ENCODE measurements at regions of chr15 and their contacts with region 1.

Region 1: GRCh38 chr15:60326824-60327654 is 70.7 kb downstream of the ANXA2 start:
- DNase-seq: no peak
- ATAC-seq: no peak
- H3K4me3 ChIP-seq: no peak overlapping the region
- H3K27ac ChIP-seq: no peak overlapping the region
- H3K4me1 ChIP-seq: peaks cover 0 to 1% of the 10 kb centered on the region in 2 donors
- H3K27me3 ChIP-seq: no peaks in the 10 kb centered on the region

Region 2: GRCh38 chr15:59688841-59689625 is 638.0 kb before region 1 on chr15 and contains the start of gene BNIP2:
- intact Hi-C with region 1: loop called (anchors 2 to 10 kb)
- DNase-seq: peak; percentile 100
- ATAC-seq: peak; percentile 99
- H3K4me3 ChIP-seq: peak within 1 kb of the TSS; percentile 77 to 80
- H3K27ac ChIP-seq: peak within 1 kb of the TSS; percentile 81 to 92
- H3K4me1 ChIP-seq: no peaks in the 10 kb centered on the region
- H3K27me3 ChIP-seq: no peaks in the 10 kb centered on the region
- total RNA-seq, gene BNIP2: 85.8 to 90.5 TPM

Region 3: DNA sequence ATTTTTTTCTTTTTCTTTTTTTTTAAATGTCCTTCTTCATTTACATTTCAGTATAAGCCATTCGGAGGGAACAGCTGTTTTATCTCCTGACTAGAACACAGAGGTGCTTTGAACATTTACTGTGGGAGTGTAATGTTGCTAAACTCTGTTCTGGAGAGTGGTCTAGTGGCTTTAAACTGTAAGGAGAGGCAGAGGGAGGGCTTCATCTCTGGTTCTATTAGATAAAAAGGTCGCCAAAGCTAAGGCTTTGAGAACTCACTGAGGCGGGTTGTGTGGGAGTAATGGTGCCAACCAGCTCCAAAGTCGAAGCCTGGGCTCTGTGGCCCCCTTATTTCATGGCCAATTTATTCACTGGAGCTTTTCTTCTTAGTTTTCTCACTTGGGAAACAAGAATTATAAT is 62.5 kb before region 1 on chr15:
- intact Hi-C with region 1: loop called in 1 of 2 experiments (anchors 10 kb)
- DNase-seq: no peak
- ATAC-seq: no peak
- H3K4me3 ChIP-seq: no peak overlapping the region
- H3K27ac ChIP-seq: no peak overlapping the region
- H3K4me1 ChIP-seq: no peaks in the 10 kb centered on the region
- H3K27me3 ChIP-seq: peaks cover 0 to 2% of the 10 kb centered on the region in 2 donors

Region 4: DNA sequence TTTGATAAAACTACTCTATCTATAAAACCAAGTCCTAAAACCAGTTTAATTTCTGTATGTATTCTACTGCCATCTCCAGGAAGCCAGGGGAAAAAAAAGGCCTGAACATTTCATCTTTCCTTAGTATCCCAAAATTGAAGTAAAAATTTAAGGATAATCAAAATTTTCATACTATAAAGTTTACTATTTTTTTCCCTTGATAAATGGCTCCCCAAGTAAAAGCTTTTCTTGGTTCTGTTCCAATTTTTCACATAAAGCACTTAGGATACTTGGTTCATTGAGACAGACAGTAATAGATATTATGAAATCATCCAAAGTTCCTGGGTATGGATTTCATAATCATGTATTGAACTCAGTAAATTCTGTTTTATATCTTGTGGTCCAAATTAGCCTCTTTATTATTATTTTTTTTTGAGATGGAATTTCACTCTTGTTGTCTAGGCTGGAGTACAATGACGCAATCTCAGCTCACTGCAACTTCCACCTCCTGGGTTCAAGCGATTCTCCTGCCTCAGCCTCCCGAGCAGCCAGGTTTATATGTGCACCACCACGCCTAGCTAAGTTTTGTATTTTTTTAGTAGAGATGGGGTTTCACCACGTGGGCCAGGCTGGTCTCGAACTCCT is 117.4 kb after region 1 on chr15:
- intact Hi-C with region 1: loop called in 1 of 2 experiments (anchors 2 kb)
- DNase-seq: no peak
- ATAC-seq: no peak
- H3K4me3 ChIP-seq: no peak overlapping the region
- H3K27ac ChIP-seq: no peak overlapping the region
- H3K4me1 ChIP-seq: peaks cover 0 to 1% of the 10 kb centered on the region in 2 donors
- H3K27me3 ChIP-seq: no peaks in the 10 kb centered on the region

Region 5: DNA sequence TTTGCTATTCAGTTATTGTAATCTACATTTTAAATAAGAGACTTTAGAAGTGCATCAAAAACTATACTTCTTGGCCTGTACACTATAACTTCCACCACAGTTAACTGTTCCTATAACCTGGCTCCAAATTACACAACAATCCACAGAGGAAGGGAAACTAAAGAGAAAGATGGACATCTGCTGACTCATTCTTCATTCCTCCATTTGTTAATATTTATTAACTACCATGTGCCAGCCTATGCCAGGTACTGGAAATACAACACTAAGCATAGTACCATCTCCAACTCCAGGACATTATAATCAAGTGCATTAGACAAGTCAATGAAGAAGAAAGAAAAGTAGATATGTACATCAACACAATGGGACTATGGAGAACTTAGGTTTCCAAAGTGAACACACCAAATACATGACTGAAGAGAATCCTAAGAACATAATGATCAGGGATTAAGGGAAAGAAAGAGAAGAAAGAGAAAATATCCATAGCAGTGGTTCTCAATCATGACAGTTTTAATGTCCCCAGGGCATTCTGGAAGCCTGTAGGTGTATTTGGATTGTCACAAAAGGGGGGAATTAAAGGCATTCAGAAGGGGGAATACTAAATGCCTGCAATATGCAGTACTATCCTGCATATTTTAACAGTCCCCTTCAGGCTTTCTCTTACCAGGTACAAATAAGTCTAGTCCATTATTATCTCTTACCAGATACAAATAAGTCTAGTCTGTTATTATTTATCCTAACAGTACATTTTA is 143.0 kb after region 1 on chr15:
- intact Hi-C with region 1: no loop called
- DNase-seq: no peak
- ATAC-seq: no peak
- H3K4me3 ChIP-seq: no peak overlapping the region
- H3K27ac ChIP-seq: no peak overlapping the region
- H3K4me1 ChIP-seq: no peaks in the 10 kb centered on the region
- H3K27me3 ChIP-seq: no peaks in the 10 kb centered on the region

Measured in aorta (tissue), 5 donors.